Right lobe of liver (tissue), 6 donors: ENCODE measurements at regions of chr6 and their contacts with region 1.

Region 1: GRCh38 chr6:56595490-56596122 is 47.1 kb downstream of the DST start:
- DNase-seq: no peak
- ATAC-seq: peak; percentile 56 to 70 (median 68)
- H3K4me3 ChIP-seq: no peak overlapping the region
- H3K27ac ChIP-seq: no peak overlapping the region
- H3K4me1 ChIP-seq: no peaks in the 10 kb centered on the region
- H3K27me3 ChIP-seq: no peaks in the 10 kb centered on the region
- CTCF ChIP-seq: peak; percentile 35 to 56 (median 48)
- POLR2A ChIP-seq: no peak

Region 2: DNA sequence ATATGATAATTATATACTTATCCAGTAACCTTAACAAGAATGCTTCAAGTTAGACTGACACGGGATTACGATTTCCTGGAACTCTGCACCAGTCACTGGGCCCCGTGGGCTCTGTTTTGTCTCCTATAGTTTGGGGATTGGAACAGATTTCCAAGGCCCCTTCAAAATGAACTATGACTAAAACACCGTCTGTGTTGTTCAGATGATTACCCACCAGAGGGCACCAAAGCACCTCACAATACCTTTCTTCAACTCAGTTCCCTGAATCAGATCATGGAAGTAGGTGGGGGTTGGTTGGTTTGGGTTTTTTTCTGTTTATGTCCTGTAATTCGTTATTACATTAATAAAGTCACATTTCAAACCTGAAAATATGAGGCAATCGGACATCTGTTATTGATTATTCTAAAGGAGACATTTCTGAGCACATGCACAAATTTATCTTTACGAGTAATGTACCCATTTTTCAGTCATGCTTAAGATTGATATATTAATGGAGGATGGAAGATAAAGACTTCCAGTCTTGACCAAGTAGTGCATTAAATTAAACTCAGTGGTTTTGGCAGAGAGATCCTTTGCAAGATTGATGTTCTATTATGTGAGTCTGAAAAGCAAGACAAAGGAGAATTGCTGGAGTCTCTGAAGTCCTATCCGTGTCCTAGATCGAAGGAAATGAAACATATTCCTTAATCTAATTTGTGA is 236.3 kb before region 1 on chr6:
- intact Hi-C with region 1: loop called (anchors 10 kb)
- DNase-seq: peak in 1 of 3 donors; percentile 66
- ATAC-seq: peak; percentile 90 to 97 (median 96)
- H3K4me3 ChIP-seq: no peak overlapping the region
- H3K27ac ChIP-seq: no peak overlapping the region
- H3K4me1 ChIP-seq: no peaks in the 10 kb centered on the region
- H3K27me3 ChIP-seq: no peaks in the 10 kb centered on the region
- CTCF ChIP-seq: peak; percentile 74 to 95 (median 80)
- POLR2A ChIP-seq: no peak

Region 3: GRCh38 chr6:56364827-56365313 is 230.7 kb before region 1 on chr6:
- intact Hi-C with region 1: loop called in 1 of 2 experiments (anchors 10 kb)
- DNase-seq: no peak
- ATAC-seq: no peak
- H3K4me3 ChIP-seq: no peak overlapping the region
- H3K27ac ChIP-seq: no peak overlapping the region
- H3K4me1 ChIP-seq: peaks cover 0 to 6% (median 1%) of the 10 kb centered on the region in 4 donors
- H3K27me3 ChIP-seq: no peaks in the 10 kb centered on the region
- CTCF ChIP-seq: no peak
- POLR2A ChIP-seq: no peak

Region 4: GRCh38 chr6:56827908-56828649 is 232.5 kb after region 1 on chr6:
- intact Hi-C with region 1: no loop called
- DNase-seq: no peak
- ATAC-seq: no peak
- H3K4me3 ChIP-seq: no peak overlapping the region
- H3K27ac ChIP-seq: no peak overlapping the region
- H3K4me1 ChIP-seq: no peaks in the 10 kb centered on the region
- H3K27me3 ChIP-seq: no peaks in the 10 kb centered on the region
- CTCF ChIP-seq: no peak
- POLR2A ChIP-seq: no peak